Caco-2 (cell line): ENCODE measurements at regions of chr10 and their contacts with region 1.

Region 1: GRCh38 chr10:119445311-119445934 is 97.1 kb downstream of the RGS10 start:
- DNase-seq: peak; percentile 84 to 90
- H3K4me3 ChIP-seq: no peak overlapping the region
- H3K4me3 Mint-ChIP-seq: no peak overlapping the region
- H3K27ac Mint-ChIP-seq: no peak overlapping the region
- H3K4me1 ChIP-seq: no peaks in the 10 kb centered on the region
- H3K4me1 Mint-ChIP-seq: no peaks in the 10 kb centered on the region
- H3K27me3 ChIP-seq: no peaks in the 10 kb centered on the region
- H3K27me3 Mint-ChIP-seq: no peaks in the 10 kb centered on the region
- CTCF ChIP-seq: peak; percentile 91 to 98

Region 2: DNA sequence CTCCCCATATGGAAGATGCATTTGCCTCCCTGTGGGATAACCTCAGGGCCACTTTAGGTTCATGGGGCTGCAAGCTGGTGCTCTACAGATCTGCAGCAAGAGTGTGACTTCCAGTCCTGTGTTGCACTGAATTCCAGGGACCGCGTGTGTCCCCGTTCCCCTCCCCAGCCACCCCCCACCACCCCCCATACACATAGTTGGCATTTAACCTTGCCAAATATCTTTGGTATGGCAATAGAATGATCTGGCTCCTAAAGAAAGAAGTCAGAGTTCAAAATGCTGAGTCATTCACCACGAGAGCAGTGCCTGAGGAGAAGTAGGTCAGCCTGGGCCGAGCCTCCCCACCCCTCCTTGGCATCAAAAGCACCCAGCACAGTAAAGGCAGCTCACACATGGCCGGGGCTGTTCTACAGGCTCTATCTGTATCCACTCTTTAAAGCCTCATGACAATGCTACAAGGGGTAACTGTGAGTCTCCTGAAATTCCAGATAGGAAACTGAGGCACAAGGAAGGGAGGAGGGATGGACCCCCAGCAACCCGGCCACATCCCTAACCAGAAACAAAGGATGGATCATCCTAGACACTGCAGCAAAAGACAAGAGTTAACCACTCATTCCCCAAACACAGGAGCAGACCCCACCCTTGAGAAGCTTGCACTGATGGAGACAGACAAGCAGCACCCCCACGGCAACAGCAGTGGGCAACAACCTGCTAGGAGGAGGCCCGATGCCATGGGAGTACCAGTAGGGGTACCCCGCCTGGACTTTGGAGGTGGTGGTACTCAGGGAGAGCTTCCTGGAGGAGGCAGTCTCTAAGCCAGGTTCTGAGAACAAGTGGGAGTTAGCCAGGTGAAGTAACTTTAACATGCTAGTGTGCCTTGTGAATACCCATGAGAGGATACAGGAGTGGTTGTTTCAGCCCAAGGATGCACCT is 486.2 kb before region 1 on chr10:
- CTCF ChIA-PET with region 1: no interaction called
- POLR2A ChIA-PET with region 1: no interaction called
- intact Hi-C with region 1: no loop called
- DNase-seq: no peak
- H3K4me3 ChIP-seq: no peak overlapping the region
- H3K4me3 Mint-ChIP-seq: no peak overlapping the region
- H3K27ac Mint-ChIP-seq: peak overlapping the region; percentile 55
- H3K4me1 ChIP-seq: peaks cover 24% of the 10 kb centered on the region
- H3K4me1 Mint-ChIP-seq: peaks cover 16% of the 10 kb centered on the region
- H3K27me3 ChIP-seq: no peaks in the 10 kb centered on the region
- H3K27me3 Mint-ChIP-seq: no peaks in the 10 kb centered on the region
- CTCF ChIP-seq: no peak

Region 3: DNA sequence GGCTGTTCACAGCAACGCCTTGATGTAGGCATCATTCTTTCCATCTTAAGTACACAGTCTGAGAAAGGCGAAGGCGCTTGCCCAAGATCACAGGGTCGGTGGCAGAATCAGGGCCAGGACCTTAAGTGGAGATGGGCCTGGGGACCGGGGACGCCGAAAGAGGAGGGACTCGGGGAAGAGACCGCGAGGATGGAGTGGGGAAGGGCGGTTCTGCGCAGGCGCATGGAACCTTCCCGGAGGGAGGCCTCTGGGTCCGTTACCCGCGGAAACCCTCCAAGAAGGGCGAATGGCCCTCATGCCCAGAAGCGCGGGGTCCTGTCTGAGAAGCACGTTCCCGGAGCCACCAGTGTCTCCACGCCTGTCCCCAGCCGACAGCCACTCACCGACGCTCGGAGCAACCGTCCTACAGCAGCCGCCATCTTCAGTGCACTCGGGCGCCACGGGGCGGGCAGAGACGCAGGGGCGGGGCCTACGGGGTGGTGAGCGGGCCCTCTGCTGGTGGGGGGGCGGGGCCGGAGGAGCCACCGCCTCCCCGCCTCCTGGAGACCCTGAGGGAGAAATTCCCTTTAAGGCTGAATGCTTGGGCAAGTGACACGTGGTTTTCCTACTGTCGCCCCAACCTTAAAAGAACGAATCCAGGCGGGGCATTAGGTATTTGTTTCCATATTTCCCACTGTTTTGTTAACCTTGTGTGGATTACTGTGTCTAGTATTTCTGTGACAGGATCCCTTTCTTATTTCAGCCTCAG is 266.9 kb before region 1 on chr10 and contains the start of gene PRDX3:
- CTCF ChIA-PET with region 1: no interaction called
- POLR2A ChIA-PET with region 1: no interaction called
- intact Hi-C with region 1: no loop called
- DNase-seq: peak; percentile 95 to 97
- H3K4me3 ChIP-seq: peak within 1 kb of the TSS; percentile 59
- H3K4me3 Mint-ChIP-seq: peak within 1 kb of the TSS; percentile 99
- H3K27ac Mint-ChIP-seq: peak within 1 kb of the TSS; percentile 99
- H3K4me1 ChIP-seq: peaks cover 12% of the 10 kb centered on the region
- H3K4me1 Mint-ChIP-seq: peaks cover 7% of the 10 kb centered on the region
- H3K27me3 ChIP-seq: no peaks in the 10 kb centered on the region
- H3K27me3 Mint-ChIP-seq: no peaks in the 10 kb centered on the region
- CTCF ChIP-seq: peak in 1 of 2 experiments; percentile 14
- total RNA-seq, gene PRDX3: 213 and 216 TPM in 2 replicates

Region 4: DNA sequence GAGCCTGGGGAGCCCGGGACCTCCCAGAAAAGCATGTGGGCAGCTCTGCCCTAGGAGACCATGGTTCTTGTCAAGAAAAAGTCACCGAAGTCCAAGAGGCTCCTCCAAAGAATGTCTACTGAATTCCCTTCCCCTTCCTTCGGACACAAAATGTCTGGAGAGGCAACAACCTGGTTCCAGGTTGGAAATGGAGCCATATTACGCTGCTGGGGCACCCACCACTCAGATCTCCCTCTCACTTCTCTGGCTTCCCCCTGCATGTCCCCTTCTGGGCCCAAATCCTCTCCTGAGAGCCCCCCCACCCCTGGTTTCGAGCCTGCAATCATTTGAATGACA is 44.5 kb after region 1 on chr10:
- CTCF ChIA-PET with region 1: interaction called, 11 read pairs
- POLR2A ChIA-PET with region 1: no interaction called
- intact Hi-C with region 1: loop called (anchors 2 kb)
- DNase-seq: no peak
- H3K4me3 ChIP-seq: no peak overlapping the region
- H3K4me3 Mint-ChIP-seq: no peak overlapping the region
- H3K27ac Mint-ChIP-seq: no peak overlapping the region
- H3K4me1 ChIP-seq: 0 out of 2 replicates have a peak, but pooled peaks cover 5% of the 10 kb centered on the region
- H3K4me1 Mint-ChIP-seq: no peaks in the 10 kb centered on the region
- H3K27me3 ChIP-seq: no peaks in the 10 kb centered on the region
- H3K27me3 Mint-ChIP-seq: no peaks in the 10 kb centered on the region
- CTCF ChIP-seq: peak in 1 of 2 experiments; percentile 15

Region 5: GRCh38 chr10:119521443-119522204 is 76.2 kb after region 1 on chr10:
- CTCF ChIA-PET with region 1: no interaction called
- POLR2A ChIA-PET with region 1: no interaction called
- intact Hi-C with region 1: no loop called
- DNase-seq: no peak
- H3K4me3 ChIP-seq: no peak overlapping the region
- H3K4me3 Mint-ChIP-seq: no peak overlapping the region
- H3K27ac Mint-ChIP-seq: peak overlapping the region; percentile 25
- H3K4me1 ChIP-seq: no peaks in the 10 kb centered on the region
- H3K4me1 Mint-ChIP-seq: no peaks in the 10 kb centered on the region
- H3K27me3 ChIP-seq: no peaks in the 10 kb centered on the region
- H3K27me3 Mint-ChIP-seq: no peaks in the 10 kb centered on the region
- CTCF ChIP-seq: no peak